Heart right ventricle (tissue), 16 donors: ENCODE measurements at regions of chr5 and their contacts with region 1.

Region 1: GRCh38 chr5:94968507-94969095 is 316.3 kb downstream of the MCTP1 start:
- DNase-seq: peak in 1 of 2 donors; percentile 24
- ATAC-seq: peak in 7 of 8 donors; percentile 55 to 79 (median 71)
- H3K4me3 ChIP-seq: no peak overlapping the region
- H3K27ac ChIP-seq: no peak overlapping the region
- H3K4me1 ChIP-seq: peaks cover 0 to 5% (median 0%) of the 10 kb centered on the region in 9 donors
- H3K27me3 ChIP-seq: no peaks in the 10 kb centered on the region
- CTCF ChIP-seq: peak; percentile 55 to 85 (median 73)

Region 2: GRCh38 chr5:94870511-94871183 is 98.0 kb before region 1 on chr5:
- intact Hi-C with region 1: no loop called
- DNase-seq: no peak
- ATAC-seq: no peak
- H3K4me3 ChIP-seq: no peak overlapping the region
- H3K27ac ChIP-seq: no peak overlapping the region
- H3K4me1 ChIP-seq: no peaks in the 10 kb centered on the region
- H3K27me3 ChIP-seq: no peaks in the 10 kb centered on the region
- CTCF ChIP-seq: no peak

Region 3: GRCh38 chr5:95238560-95239325 is 270.1 kb after region 1 on chr5:
- intact Hi-C with region 1: loop called in 9 of 10 experiments (anchors 2 to 10 kb)
- DNase-seq: no peak
- ATAC-seq: peak in 1 of 8 donors; percentile 38
- H3K4me3 ChIP-seq: no peak overlapping the region
- H3K27ac ChIP-seq: no peak overlapping the region
- H3K4me1 ChIP-seq: no peaks in the 10 kb centered on the region
- H3K27me3 ChIP-seq: peaks cover 0 to 4% (median 0%) of the 10 kb centered on the region in 7 donors
- CTCF ChIP-seq: peak in 7 of 9 donors; percentile 27 to 60 (median 38)

Region 4: DNA sequence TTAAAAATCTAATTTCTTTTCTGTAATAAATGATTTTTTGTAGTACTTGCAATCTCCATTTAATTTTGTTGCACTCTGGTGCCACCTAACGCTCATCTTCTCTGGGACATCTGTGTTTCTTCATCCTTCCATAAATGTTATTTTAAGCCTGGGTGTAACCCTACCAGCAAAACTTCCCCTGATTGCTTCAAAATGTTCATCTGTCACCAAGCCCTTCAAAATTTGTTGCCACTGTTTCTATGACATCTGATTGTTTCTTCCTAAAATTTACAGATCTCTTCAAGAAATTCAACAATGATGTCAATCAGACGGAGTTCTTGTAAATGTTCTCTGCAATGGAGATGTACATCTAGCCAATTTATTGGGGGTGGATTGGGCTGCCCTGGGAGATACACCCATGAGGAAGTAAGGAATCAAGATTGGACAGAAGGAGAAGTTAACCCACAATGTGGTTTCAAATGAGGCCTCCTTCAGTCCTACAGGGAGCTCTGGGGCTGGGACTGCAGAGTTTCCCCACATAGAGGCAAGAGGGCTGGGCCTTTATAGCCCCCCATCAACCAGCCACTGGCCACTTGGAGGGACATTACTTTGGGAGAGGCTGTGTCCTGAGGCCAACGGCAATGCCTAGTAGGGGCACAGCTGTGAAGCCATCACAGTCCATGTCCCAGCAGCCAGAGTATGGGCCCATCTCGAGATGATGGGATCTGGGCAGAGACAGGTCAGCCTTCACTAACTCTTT is 293.0 kb after region 1 on chr5:
- intact Hi-C with region 1: loop called in 2 of 10 experiments (anchors 2 to 10 kb)
- DNase-seq: no peak
- ATAC-seq: peak in 4 of 8 donors; percentile 43 to 58 (median 54)
- H3K4me3 ChIP-seq: no peak overlapping the region
- H3K27ac ChIP-seq: no peak overlapping the region
- H3K4me1 ChIP-seq: no peaks in the 10 kb centered on the region
- H3K27me3 ChIP-seq: no peaks in the 10 kb centered on the region
- CTCF ChIP-seq: peak in 7 of 9 donors; percentile 26 to 59 (median 43)